PC-9 (cell line): ENCODE measurements at regions of chr5 and their contacts with region 1.

Region 1: GRCh38 chr5:57338068-57338892 is 144.3 kb downstream of the ACTBL2 start:
- DNase-seq: peak; percentile 31 to 72
- H3K4me3 ChIP-seq: no peak overlapping the region
- H3K27ac ChIP-seq: peak overlapping the region; percentile 67
- H3K4me1 ChIP-seq: peaks cover 37% of the 10 kb centered on the region
- H3K27me3 ChIP-seq: no peaks in the 10 kb centered on the region
- CTCF ChIP-seq: peak; percentile 50

Region 2: GRCh38 chr5:57442080-57442839 is 104.0 kb after region 1 on chr5:
- CTCF ChIA-PET with region 1: interaction called, 10 read pairs
- POLR2A ChIA-PET with region 1: no interaction called
- intact Hi-C with region 1: no loop called
- DNase-seq: no peak
- H3K4me3 ChIP-seq: no peak overlapping the region
- H3K27ac ChIP-seq: peak overlapping the region; percentile 82
- H3K4me1 ChIP-seq: peaks cover 29% of the 10 kb centered on the region
- H3K27me3 ChIP-seq: no peaks in the 10 kb centered on the region
- CTCF ChIP-seq: no peak